ENCODE measurements at regions of chr10 and their contacts with region 1.

Region 1: GRCh38 chr10:112471878-112472487 is 25.0 kb downstream of the VTI1A start:
- DNase-seq: no peak

Region 2: GRCh38 chr10:112605063-112605462 is 133.1 kb after region 1 on chr10:
- intact Hi-C with region 1: no loop called
- DNase-seq: no peak

Region 3: GRCh38 chr10:112615269-112615668 is 143.3 kb after region 1 on chr10:
- intact Hi-C with region 1: no loop called
- DNase-seq: no peak

Region 4: DNA sequence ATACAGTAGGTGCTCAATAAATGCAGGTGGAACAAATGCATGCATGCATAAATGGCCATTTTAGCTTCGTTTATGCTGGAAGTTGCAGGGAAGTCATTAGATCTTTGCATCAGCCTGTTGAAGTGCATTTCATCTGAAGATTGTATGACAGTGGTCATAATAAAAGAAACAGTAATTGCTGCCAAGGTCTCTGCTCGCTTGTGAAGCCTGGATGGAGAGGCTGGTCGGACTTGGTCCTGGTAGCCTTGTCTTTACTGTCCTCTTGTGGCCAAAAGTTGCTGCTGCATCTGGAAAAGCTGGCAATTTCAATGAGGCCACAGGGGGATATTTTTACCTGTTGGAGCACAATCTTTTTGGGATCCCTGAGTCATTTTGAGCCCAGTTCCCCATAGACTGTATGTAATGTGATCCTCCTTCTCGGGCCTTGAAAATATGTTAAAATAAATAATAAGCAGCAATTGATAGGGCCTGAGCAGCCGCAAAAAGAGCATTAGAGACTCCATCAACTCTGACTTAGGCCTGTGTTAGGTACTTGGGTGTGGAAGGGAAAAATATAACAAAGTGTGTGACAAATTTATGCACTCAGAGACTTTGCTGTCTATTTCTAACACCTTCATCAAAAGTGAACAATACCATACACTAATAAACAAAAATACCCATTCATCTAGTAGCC is 1049.3 kb after region 1 on chr10:
- intact Hi-C with region 1: loop called (anchors 5 kb)
- DNase-seq: peak in 8 of 10 donors; percentile 21 to 89 (median 54)

Region 5: DNA sequence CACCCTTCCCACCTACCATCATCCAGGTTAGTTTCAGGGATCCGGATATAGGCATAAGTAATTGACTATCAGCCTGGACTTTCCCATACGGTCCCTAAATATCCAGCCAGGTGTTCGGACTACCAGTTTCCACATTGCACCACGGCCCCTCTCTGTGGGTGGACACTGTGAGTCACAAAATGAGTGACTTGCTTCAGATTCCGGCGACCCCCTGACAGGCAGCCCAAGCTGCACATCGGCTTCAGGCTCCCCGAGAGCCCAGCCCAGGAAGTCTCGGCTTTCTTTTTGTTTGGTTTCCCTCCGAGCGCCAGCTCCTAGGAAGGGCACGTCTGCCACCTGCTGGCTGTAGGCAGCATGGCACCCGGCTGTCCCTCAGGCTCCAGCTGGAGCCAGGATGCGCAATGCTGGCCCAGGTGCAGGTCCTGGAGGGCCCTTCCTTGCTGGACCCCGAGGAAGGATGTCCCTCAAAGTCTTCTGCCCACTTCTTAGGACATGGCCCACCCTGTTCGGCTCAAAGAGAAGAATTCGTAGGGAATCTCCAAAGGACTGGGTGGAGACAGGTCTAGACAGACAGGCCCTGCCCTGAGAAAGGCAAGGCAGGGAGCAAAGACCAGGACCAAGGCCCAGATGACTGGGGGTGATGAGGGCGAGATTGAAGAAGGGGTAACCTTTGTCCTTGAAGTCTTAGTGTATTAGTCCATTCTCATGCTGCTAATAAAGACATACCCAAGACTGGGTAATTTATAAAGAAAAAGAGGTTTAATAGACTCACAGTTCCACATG is 1091.5 kb after region 1 on chr10:
- intact Hi-C with region 1: loop called (anchors 10 kb)
- DNase-seq: peak; percentile 53 to 96 (median 78)